Calu3 (cell line): ENCODE measurements at regions of chr22 and their contacts with region 1.

Region 1: DNA sequence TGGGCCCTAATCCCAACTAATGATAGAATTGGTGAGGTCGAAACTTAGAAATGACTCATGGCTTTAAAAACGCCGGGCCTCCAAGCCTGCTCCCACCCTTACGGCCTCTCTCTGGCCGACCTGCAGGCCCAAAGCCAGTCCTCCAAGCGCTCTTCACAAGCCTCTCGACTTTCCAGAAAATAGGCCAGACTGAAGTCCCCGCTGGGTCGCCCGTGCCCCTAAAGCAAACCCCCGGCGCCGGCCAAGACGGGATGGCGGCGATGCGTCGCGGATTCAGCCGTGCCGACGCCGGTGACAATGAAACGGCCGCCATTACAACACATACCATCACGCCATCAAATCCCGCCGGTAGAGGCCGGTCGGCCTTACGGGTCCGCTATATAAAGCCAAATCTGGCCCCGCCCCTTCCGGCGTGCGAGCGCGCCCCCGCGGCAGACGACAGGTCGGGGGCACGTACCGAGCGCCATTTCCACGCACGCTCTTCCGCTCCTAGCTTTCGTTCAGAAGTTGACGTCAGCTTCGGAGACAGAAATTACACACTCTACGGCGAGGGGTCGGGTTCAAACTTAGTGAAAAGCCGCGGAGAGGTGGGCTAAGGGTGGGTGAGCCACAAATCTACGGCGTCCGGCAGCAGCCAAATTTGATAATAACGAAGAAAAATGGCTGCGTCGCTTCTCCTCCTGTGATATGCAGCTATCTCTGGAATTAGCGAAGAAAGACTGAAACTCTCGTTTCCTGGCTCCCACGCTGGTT is at the start of gene RPL3:
- DNase-seq: peak; percentile 97
- H3K4me3 Mint-ChIP-seq: peak within 1 kb of the TSS; percentile 95
- H3K27ac Mint-ChIP-seq: peak within 1 kb of the TSS; percentile 100
- H3K4me1 Mint-ChIP-seq: peaks cover 41% of the 10 kb centered on the region
- H3K27me3 Mint-ChIP-seq: peaks cover 12% of the 10 kb centered on the region
- CTCF ChIP-seq: no peak
- total RNA-seq, gene RPL3: 977 and 1,058 TPM in 2 replicates

Region 2: DNA sequence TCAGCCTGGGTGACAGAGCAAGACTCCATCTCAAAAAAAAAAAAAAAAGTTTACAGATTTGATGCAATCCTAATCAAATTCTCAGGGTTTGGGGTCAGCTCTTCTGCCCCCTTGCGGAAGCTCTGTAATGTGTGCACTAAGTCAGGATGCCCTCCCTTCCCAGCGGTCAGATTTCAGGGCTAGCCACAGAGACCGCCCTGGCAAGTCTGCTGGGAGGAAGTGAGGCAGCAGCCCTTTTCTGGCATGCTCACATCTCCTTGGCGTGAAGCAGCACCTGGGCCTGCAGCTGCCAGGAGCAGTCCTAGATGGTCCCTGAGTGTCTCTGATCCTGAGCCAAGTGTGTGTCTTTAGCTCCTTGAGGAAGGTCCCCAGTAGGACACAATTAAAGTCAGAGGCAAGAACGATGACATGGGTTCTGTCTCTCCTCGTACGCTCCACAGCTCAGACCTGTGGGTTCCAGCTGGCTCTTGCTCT is 316.2 kb before region 1 on chr22:
- CTCF ChIA-PET with region 1: no interaction called
- intact Hi-C with region 1: loop called (anchors 5 kb)
- DNase-seq: peak; percentile 85
- H3K4me3 Mint-ChIP-seq: no peak overlapping the region
- H3K27ac Mint-ChIP-seq: no peak overlapping the region
- H3K4me1 Mint-ChIP-seq: no peaks in the 10 kb centered on the region
- H3K27me3 Mint-ChIP-seq: no peaks in the 10 kb centered on the region
- CTCF ChIP-seq: peak; percentile 76

Region 3: GRCh38 chr22:39170825-39171622 is 148.4 kb before region 1 on chr22:
- CTCF ChIA-PET with region 1: interaction called, 16 read pairs
- intact Hi-C with region 1: no loop called
- DNase-seq: peak; percentile 93
- H3K4me3 Mint-ChIP-seq: no peak overlapping the region
- H3K27ac Mint-ChIP-seq: peak overlapping the region; percentile 0
- H3K4me1 Mint-ChIP-seq: peaks cover 63% of the 10 kb centered on the region
- H3K27me3 Mint-ChIP-seq: no peaks in the 10 kb centered on the region
- CTCF ChIP-seq: peak; percentile 95

Region 4: DNA sequence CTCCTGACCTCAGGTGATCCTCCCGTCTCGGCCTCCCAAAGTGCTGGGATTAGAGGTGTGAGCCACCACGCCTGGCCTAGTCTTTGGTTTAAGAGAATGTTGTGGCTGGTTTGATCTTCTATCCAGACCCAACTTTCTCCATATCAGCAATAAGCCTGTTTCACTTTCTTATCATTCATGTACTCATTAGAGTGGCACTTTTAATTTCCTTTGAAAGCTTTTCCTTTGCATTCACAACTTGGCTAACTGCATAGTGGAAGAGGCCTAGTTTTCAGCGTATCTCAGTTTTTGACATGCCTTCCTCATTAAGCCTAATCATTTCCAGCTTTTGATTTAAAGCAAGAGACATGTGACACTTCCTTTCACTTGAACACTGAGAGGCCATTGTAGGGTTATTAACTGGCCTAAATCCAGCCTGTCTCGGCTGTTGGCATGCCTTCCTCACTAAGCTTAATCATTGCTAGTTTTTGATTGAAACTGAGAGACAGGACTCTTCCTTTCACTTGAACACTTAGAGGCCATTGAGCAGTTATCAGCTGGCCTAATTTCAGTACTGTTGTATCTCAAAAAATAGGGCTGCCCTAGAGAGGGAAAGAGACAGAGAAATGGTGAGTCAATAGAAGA is 13.1 kb after region 1 on chr22:
- CTCF ChIA-PET with region 1: interaction called, 11 read pairs
- intact Hi-C with region 1: no loop called
- DNase-seq: peak; percentile 55
- H3K4me3 Mint-ChIP-seq: peak overlapping the region; percentile 41
- H3K27ac Mint-ChIP-seq: peak overlapping the region; percentile 83
- H3K4me1 Mint-ChIP-seq: peaks cover 21% of the 10 kb centered on the region
- H3K27me3 Mint-ChIP-seq: no peaks in the 10 kb centered on the region
- CTCF ChIP-seq: no peak

Region 5: DNA sequence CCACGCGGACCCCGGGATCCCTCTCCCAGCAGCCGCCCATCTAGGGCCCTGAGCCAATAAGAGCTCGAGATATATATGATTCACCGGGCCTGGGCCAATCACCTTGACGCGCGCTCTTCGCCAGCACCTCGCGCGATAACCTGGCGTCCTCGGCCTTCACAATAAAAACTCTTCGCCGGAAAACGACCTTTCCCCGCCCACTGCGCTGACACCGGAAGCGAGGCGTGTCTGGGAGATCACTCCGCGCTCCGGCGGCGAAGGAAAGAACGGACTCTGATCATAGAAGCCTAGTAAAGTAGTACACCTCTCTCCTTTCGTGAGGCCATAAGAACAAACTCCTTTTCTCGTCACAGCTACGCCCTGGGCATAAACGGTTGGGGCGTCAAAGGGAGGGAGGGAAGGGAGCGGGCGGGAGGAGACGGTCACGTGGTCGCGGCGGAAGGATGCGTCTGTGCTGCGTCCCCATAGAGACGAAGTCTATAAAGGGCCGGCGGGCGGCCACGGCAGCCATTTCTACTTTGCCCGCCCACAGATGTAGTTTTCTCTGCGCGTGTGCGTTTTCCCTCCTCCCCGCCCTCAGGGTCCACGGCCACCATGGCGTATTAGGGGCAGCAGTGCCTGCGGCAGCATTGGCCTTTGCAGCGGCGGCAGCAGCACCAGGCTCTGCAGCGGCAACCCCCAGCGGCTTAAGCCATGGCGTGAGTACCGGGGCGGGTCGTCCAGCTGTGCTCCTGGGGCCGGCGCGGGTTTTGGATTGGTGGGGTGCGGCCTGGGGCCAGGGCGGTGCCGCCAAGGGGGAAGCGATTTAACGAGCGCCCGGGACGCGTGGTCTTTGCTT is 200.8 kb after region 1 on chr22 and contains the start of gene ATF4:
- CTCF ChIA-PET with region 1: no interaction called
- intact Hi-C with region 1: loop called (anchors 10 kb)
- DNase-seq: peak; percentile 97
- H3K4me3 Mint-ChIP-seq: peak within 1 kb of the TSS; percentile 94
- H3K27ac Mint-ChIP-seq: peak within 1 kb of the TSS; percentile 98
- H3K4me1 Mint-ChIP-seq: peaks cover 17% of the 10 kb centered on the region
- H3K27me3 Mint-ChIP-seq: no peaks in the 10 kb centered on the region
- CTCF ChIP-seq: no peak
- total RNA-seq, gene ATF4: 294 and 372 TPM in 2 replicates

Region 6: DNA sequence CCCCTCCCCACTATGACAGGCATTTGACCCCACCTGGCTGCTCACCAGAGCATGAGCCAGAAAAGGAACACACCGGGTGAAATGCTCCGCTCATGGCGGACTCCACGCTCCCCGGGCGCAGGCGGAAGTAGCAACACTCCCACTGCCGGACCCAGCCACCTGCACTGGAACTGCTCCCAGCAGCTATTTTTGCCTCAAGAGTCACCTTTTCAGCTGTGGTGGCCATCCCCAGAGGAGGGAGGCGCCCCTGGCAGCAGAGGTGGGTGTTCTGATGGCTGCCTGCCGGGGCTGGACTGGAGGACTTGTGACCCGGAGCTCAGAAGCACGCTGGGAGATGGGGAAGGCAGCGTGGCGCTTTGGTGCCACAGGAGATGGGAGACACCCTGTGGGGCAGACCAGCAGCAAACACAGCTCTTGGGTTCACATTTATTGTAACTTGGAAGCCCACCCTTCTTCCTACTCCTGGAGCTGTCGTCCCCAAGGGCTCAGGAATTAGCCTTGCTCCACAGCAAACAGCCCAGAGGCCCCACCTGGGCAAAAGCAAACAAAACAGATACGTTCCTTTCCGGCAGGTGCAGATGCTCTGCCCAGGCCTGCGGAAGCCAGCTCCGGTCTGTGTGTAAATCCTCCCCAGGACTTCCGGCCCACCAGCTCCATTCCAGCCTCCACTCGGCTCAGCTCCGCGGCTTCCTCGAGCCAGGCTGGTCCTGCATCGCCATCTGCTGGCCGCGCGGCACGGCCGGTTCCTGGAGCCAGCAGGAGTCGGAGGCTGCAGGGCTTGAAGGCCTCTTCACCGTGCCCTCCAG is 209.4 kb after region 1 on chr22:
- CTCF ChIA-PET with region 1: interaction called, 15 read pairs
- intact Hi-C with region 1: loop called (anchors 10 kb)
- DNase-seq: peak; percentile 92
- H3K4me3 Mint-ChIP-seq: peak overlapping the region; percentile 98
- H3K27ac Mint-ChIP-seq: peak overlapping the region; percentile 4
- H3K4me1 Mint-ChIP-seq: peaks cover 65% of the 10 kb centered on the region
- H3K27me3 Mint-ChIP-seq: no peaks in the 10 kb centered on the region
- CTCF ChIP-seq: peak; percentile 97